A549 (cell line): ENCODE measurements at regions of chr1 and their contacts with region 1.

Region 1: GRCh38 chr1:20493839-20494608 is 8.0 kb upstream of the CAMK2N1 start:
- DNase-seq: peak; percentile 76 to 85
- ATAC-seq: peak; percentile 73 to 90
- H3K4me3 ChIP-seq: no peak overlapping the region
- H3K27ac ChIP-seq: peak overlapping the region; percentile 67 to 73
- H3K4me1 ChIP-seq: peaks cover 16% of the 10 kb centered on the region
- CTCF ChIP-seq: peak; percentile 86
- EP300 ChIP-seq: no peak
- POLR2A ChIP-seq: no peak
- RAD21 ChIP-seq: peak; percentile 97 to 99

Region 2: DNA sequence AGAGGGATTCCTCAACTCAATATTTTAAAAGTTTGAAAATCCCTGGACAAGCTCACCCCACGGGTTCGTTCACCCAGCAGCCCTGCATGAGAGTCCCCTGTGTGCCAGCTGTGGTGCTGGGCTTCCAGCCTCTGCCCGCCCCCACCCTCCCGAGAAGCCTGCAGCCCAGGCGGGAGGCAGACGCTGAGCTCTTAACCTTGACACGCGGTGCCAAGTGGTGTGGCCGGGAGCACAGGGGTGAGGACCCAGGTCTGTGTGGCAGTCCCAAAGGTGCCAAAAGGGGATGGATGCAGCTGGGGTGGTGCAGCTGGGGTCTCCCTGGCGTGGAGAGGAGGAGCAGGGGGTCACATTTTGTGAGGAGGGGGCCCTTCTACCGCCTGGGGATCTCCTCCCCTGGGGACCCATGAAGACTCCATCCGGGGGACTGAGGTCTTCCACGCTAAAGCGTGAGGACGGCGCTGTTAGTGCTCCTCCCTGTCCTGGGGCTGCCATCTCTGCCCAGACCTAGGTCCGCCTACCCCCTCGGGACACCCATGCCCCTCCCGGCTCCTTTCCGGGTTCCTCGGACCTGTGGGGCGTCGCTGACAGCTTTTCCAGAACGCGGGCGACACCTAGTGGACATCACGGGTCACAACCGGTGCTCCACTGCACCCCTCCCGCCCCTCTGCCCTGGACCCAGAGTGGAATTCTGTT is 342.0 kb before region 1 on chr1:
- CTCF ChIA-PET with region 1: interaction called, 10 read pairs
- POLR2A ChIA-PET with region 1: no interaction called
- DNase-seq: peak; percentile 69 to 81
- ATAC-seq: peak; percentile 92 to 98
- H3K4me3 ChIP-seq: peak overlapping the region; percentile 50
- H3K27ac ChIP-seq: peak overlapping the region; percentile 75 to 77
- H3K4me1 ChIP-seq: 0 out of 3 replicates have a peak, but pooled peaks cover 10% of the 10 kb centered on the region
- CTCF ChIP-seq: peak; percentile 78
- EP300 ChIP-seq: no peak
- POLR2A ChIP-seq: no peak
- RAD21 ChIP-seq: peak; percentile 88 to 92

Region 3: DNA sequence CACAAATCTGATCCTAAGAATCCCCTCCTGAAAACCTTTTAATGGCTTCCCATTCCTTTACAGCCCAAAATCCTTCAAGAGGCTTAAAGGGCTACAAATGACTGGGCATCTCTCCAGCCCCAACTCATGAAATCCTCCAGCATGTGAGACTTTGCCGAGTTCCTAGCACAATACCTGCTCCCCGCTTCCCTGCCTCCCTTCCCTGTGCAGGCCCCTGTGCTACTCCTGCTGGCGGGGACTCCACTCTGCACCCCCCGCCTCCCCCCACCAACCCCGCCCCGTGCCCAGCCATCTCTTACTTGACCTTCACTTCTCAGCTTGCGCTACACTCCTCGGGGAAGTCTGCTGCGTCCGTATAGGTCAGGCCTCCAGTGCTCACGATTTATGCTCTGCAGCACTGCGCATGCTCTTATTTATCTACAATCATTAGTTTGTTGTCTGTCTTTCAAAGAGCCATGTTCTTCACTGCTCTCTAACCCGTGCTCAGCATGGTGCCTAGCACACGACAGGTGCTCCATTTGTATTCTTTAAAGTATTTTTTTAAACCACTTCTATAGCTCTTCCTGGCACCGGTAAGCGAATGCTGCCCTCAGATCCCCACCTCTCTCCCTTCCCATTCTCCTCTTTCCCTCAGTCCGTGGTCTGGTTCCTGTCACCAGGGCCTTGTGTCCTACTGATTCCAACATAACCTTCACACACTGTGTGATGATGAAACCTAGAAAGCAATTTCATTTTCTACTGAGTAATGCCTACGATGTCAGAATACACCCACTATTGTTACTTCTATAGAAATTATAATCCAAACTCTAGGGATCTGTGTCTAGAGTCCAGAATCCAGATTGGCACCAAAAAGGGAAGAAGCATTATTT is 270.2 kb before region 1 on chr1:
- CTCF ChIA-PET with region 1: interaction called, 10 read pairs
- POLR2A ChIA-PET with region 1: no interaction called
- DNase-seq: no peak
- ATAC-seq: no peak
- H3K4me3 ChIP-seq: no peak overlapping the region
- H3K27ac ChIP-seq: no peak overlapping the region
- H3K4me1 ChIP-seq: no peaks in the 10 kb centered on the region
- CTCF ChIP-seq: no peak
- EP300 ChIP-seq: no peak
- POLR2A ChIP-seq: no peak
- RAD21 ChIP-seq: no peak

Region 4: GRCh38 chr1:20361806-20362640 is 132.0 kb before region 1 on chr1:
- CTCF ChIA-PET with region 1: interaction called, 18 read pairs
- POLR2A ChIA-PET with region 1: no interaction called
- DNase-seq: peak; percentile 49 to 51
- ATAC-seq: peak; percentile 32 to 80; a peak in 3 of 6 replicates
- H3K4me3 ChIP-seq: no peak overlapping the region
- H3K27ac ChIP-seq: no peak overlapping the region
- H3K4me1 ChIP-seq: peaks cover 18% of the 10 kb centered on the region
- CTCF ChIP-seq: peak; percentile 60
- EP300 ChIP-seq: no peak
- POLR2A ChIP-seq: no peak
- RAD21 ChIP-seq: peak; percentile 68 to 74

Region 5: DNA sequence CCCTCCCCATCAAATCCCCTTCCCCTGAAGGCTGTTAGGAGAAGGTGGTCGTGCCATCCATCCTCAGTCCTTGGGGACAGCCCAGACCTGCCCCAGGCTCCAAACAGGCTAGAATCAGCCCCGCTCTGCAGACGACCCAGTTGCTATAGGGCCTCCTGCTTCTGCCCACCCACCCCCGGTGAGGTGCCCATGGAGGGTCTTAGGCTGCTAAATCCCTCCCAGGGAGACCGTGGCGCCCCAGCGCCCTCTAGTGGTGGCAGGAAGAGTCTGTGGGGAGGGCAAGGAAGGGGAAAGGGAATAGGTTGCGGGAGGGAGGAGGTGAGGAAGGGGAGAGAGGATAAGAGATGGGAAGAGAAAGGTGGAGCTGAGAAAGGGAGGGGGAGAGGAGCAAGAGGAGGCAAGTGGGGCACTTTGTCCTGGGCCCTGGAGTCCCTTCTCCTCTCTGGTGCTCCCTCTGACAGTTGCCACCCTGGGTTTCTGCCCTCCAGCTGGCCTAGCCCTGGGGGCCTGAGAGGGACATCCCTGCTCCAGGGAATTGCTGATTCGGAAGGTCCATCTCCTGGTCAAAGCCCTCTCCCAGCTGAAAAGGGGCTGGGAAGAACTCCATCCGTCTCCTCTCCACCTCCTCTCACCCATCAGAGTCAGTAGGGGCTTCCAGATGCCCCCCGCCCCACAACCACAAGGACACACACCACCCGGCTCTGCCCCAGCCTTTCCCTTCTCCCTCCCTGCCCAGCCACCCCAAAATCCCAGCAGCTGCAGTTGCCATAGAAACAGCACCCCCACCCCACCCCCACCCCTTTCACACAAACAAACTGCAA is 63.5 kb before region 1 on chr1:
- CTCF ChIA-PET with region 1: interaction called, 55 read pairs
- POLR2A ChIA-PET with region 1: no interaction called
- DNase-seq: peak; percentile 23 to 39
- ATAC-seq: peak; percentile 55 to 87; a peak in 3 of 6 replicates
- H3K4me3 ChIP-seq: no peak overlapping the region
- H3K27ac ChIP-seq: peak overlapping the region; percentile 35 to 61; a peak in 3 of 6 replicates
- H3K4me1 ChIP-seq: peaks cover 11% of the 10 kb centered on the region
- CTCF ChIP-seq: peak; percentile 64
- EP300 ChIP-seq: no peak
- POLR2A ChIP-seq: no peak
- RAD21 ChIP-seq: peak; percentile 80 to 83

Region 6: GRCh38 chr1:20472860-20473711 is 20.9 kb before region 1 on chr1:
- CTCF ChIA-PET with region 1: interaction called, 15 read pairs
- POLR2A ChIA-PET with region 1: interaction called, 3 read pairs
- DNase-seq: peak; percentile 85 to 87
- ATAC-seq: peak; percentile 58 to 66
- H3K4me3 ChIP-seq: no peak overlapping the region
- H3K27ac ChIP-seq: peak overlapping the region; percentile 98 to 99
- H3K4me1 ChIP-seq: peaks cover 60% of the 10 kb centered on the region
- CTCF ChIP-seq: no peak
- EP300 ChIP-seq: no peak
- POLR2A ChIP-seq: 0 out of 2 replicates have a peak, but pooled peaks have one; percentile 24
- RAD21 ChIP-seq: no peak

Region 7: GRCh38 chr1:20521960-20522861 is 28.2 kb after region 1 on chr1:
- CTCF ChIA-PET with region 1: no interaction called
- POLR2A ChIA-PET with region 1: no interaction called
- DNase-seq: peak; percentile 36 to 72
- ATAC-seq: peak; percentile 87 to 91
- H3K4me3 ChIP-seq: no peak overlapping the region
- H3K27ac ChIP-seq: peak overlapping the region; percentile 39 to 67; a peak in 3 of 6 replicates
- H3K4me1 ChIP-seq: no peaks in the 10 kb centered on the region
- CTCF ChIP-seq: peak; percentile 86
- EP300 ChIP-seq: no peak
- POLR2A ChIP-seq: no peak
- RAD21 ChIP-seq: peak; percentile 91 to 95

Region 8: GRCh38 chr1:20540281-20540680 is 46.3 kb after region 1 on chr1:
- CTCF ChIA-PET with region 1: no interaction called
- POLR2A ChIA-PET with region 1: no interaction called
- DNase-seq: no peak
- ATAC-seq: no peak
- H3K4me3 ChIP-seq: no peak overlapping the region
- H3K27ac ChIP-seq: no peak overlapping the region
- H3K4me1 ChIP-seq: peaks cover 16% of the 10 kb centered on the region
- CTCF ChIP-seq: no peak
- EP300 ChIP-seq: no peak
- POLR2A ChIP-seq: no peak
- RAD21 ChIP-seq: no peak

Region 9: DNA sequence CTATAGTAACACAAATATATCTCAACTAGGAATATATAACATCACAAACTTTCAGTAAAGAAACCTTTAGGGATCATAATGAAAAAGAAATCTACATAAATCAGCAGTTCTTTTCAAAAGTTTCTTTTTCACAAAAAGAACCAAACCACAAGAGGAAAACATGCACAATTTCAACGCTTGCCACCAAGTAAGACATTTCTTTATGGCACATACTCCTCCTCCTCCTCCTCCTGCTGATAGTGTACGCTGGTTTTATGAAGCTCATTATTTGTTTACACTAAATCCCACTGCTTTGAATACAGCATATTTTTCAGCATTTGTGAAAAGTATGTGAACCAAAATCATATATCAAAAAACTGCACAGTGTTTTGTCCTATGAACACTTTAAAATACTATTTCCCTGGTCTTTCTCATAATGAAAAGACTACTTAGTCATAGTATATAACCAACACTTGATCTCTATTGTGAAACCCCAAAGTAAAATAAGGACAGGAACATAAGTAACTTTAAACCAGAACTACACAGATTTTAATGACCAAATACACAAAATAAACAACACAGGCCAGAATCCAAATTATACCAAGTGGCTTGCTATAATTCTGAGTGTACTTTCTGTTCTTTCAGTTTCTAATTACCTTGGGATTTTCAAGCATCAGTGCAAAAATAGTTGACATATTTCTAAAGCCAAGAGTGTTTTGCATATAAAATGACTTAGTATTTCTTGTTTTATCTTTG is 498.5 kb after region 1 on chr1:
- CTCF ChIA-PET with region 1: no interaction called
- POLR2A ChIA-PET with region 1: no interaction called
- DNase-seq: no peak
- ATAC-seq: no peak
- H3K4me3 ChIP-seq: no peak overlapping the region
- H3K27ac ChIP-seq: no peak overlapping the region; a peak in 1 of 6 replicates
- H3K4me1 ChIP-seq: peaks cover 35% of the 10 kb centered on the region; the same call in 2 of the 3 replicates
- CTCF ChIP-seq: no peak
- EP300 ChIP-seq: no peak
- POLR2A ChIP-seq: no peak
- RAD21 ChIP-seq: no peak